CD14-positive monocyte (primary cell): ENCODE measurements at regions of chr19 and their contacts with region 1.

Region 1: GRCh38 chr19:15555759-15556633 is 47.7 kb downstream of the CYP4F22 start:
- DNase-seq: peak; percentile 84 to 87 (median 86)
- H3K4me3 ChIP-seq: peak overlapping the region; percentile 21 to 74 (median 22)
- H3K4me3 Mint-ChIP-seq: peak overlapping the region; percentile 82 to 96
- H3K27ac ChIP-seq: peak overlapping the region in 1 of 2 donors; percentile 30
- H3K27ac Mint-ChIP-seq: peak overlapping the region; percentile 69 to 85 (median 77)
- H3K4me1 ChIP-seq: peaks cover 16 to 28% of the 10 kb centered on the region in 2 donors
- H3K4me1 Mint-ChIP-seq: peaks cover 20% of the 10 kb centered on the region
- H3K27me3 ChIP-seq: peaks cover 0 to 13% of the 10 kb centered on the region in 2 donors
- H3K27me3 Mint-ChIP-seq: peaks cover 18 to 35% (median 29%) of the 10 kb centered on the region in 3 donors
- CTCF ChIP-seq: peak; percentile 87

Region 2: DNA sequence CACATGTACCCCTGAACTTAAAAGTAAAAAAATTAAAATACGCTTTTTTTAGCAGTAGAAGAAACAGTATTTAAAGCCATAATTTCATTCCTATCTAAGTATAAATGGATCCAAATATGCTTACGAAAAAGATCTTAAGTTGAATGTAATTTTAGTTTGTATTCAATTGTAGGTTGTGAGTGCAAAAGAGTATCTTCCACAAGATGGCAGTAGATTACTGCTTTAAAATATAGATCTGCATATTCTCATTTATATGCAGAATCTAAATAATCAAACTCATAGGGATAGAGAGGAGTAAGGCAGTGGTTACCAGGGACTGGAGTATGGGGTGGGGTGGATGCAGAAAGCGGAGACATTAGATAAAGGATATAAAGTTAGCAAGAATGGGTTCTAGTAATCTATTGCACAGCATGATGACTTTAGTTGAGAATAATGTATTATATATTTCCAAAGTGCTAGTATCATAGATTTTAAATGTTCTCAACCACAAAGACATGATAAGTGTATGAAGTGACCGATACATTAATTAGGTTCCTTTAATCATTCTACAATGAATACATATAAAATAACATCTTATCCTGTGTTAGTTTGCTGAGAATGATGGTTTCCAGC is 684.3 kb before region 1 on chr19:
- intact Hi-C with region 1: loop called in 1 of 2 experiments (anchors 10 kb)
- DNase-seq: peak in 2 of 3 donors; percentile 9 to 40
- H3K4me3 ChIP-seq: no peak overlapping the region
- H3K4me3 Mint-ChIP-seq: no peak overlapping the region
- H3K27ac ChIP-seq: no peak overlapping the region
- H3K27ac Mint-ChIP-seq: no peak overlapping the region
- H3K4me1 ChIP-seq: no peaks in the 10 kb centered on the region
- H3K4me1 Mint-ChIP-seq: no peaks in the 10 kb centered on the region
- H3K27me3 ChIP-seq: no peaks in the 10 kb centered on the region
- H3K27me3 Mint-ChIP-seq: peaks cover 0 to 4% (median 2%) of the 10 kb centered on the region in 3 donors
- CTCF ChIP-seq: peak; percentile 64

Region 3: DNA sequence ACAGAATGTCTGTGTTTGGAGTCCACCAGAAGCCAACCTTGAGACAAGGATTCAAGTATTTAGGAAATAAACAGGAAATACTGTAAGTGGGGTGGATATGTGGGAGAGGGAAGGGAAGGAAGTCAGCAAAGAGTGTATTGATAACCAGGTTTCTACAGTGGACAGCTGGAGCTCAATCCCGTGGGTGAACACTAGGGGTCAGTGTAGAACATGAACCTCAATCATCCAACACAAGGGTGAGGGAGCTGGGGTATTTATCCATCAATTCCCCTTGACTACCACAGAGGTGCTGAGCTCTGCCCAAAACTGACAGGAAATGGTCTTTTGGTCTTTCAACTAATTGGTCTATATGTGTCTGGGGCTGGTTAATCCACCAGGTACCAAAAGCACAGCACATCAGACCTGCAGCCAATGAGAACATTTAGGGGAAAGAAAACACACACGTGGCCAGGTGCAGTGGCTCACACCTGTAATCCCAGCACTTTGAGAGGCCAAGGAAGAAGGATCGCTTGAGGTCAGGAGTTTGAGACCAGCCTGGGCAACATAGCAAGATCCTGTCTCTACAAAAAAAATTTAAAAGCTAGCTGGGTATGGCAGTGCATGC is 454.4 kb before region 1 on chr19:
- intact Hi-C with region 1: loop called in 1 of 2 experiments (anchors 10 kb)
- DNase-seq: peak; percentile 37 to 47 (median 42)
- H3K4me3 ChIP-seq: no peak overlapping the region
- H3K4me3 Mint-ChIP-seq: no peak overlapping the region
- H3K27ac ChIP-seq: no peak overlapping the region
- H3K27ac Mint-ChIP-seq: peak overlapping the region in 1 of 7 donors; percentile 46
- H3K4me1 ChIP-seq: no peaks in the 10 kb centered on the region
- H3K4me1 Mint-ChIP-seq: no peaks in the 10 kb centered on the region
- H3K27me3 ChIP-seq: peaks cover 9 to 17% of the 10 kb centered on the region in 2 donors
- H3K27me3 Mint-ChIP-seq: peaks cover 18 to 28% (median 20%) of the 10 kb centered on the region in 3 donors
- CTCF ChIP-seq: peak; percentile 85

Region 4: GRCh38 chr19:15264061-15264932 is 291.7 kb before region 1 on chr19:
- intact Hi-C with region 1: loop called (anchors 2 to 5 kb)
- DNase-seq: peak; percentile 40 to 62 (median 48)
- H3K4me3 ChIP-seq: no peak overlapping the region
- H3K4me3 Mint-ChIP-seq: no peak overlapping the region
- H3K27ac ChIP-seq: peak overlapping the region in 1 of 2 donors; percentile 18
- H3K27ac Mint-ChIP-seq: peak overlapping the region in 2 of 7 donors; percentile 19 to 54
- H3K4me1 ChIP-seq: no peaks in the 10 kb centered on the region
- H3K4me1 Mint-ChIP-seq: no peaks in the 10 kb centered on the region
- H3K27me3 ChIP-seq: no peaks in the 10 kb centered on the region
- H3K27me3 Mint-ChIP-seq: no peaks in the 10 kb centered on the region
- CTCF ChIP-seq: peak; percentile 93

Region 5: GRCh38 chr19:15432629-15433518 is 123.1 kb before region 1 on chr19:
- intact Hi-C with region 1: loop called in 1 of 2 experiments (anchors 5 kb)
- DNase-seq: peak; percentile 81 to 88 (median 88)
- H3K4me3 ChIP-seq: peak overlapping the region; percentile 87 to 95 (median 90)
- H3K4me3 Mint-ChIP-seq: peak overlapping the region; percentile 96 to 99
- H3K27ac ChIP-seq: peak overlapping the region; percentile 67 to 74
- H3K27ac Mint-ChIP-seq: peak overlapping the region; percentile 84 to 95 (median 92)
- H3K4me1 ChIP-seq: peaks cover 26 to 31% of the 10 kb centered on the region in 2 donors
- H3K4me1 Mint-ChIP-seq: peaks cover 28% of the 10 kb centered on the region
- H3K27me3 ChIP-seq: no peaks in the 10 kb centered on the region
- H3K27me3 Mint-ChIP-seq: peaks cover 0 to 11% (median 0%) of the 10 kb centered on the region in 3 donors
- CTCF ChIP-seq: no peak